ENCODE measurements at regions of chr5 and their contacts with region 1.

Region 1: DNA sequence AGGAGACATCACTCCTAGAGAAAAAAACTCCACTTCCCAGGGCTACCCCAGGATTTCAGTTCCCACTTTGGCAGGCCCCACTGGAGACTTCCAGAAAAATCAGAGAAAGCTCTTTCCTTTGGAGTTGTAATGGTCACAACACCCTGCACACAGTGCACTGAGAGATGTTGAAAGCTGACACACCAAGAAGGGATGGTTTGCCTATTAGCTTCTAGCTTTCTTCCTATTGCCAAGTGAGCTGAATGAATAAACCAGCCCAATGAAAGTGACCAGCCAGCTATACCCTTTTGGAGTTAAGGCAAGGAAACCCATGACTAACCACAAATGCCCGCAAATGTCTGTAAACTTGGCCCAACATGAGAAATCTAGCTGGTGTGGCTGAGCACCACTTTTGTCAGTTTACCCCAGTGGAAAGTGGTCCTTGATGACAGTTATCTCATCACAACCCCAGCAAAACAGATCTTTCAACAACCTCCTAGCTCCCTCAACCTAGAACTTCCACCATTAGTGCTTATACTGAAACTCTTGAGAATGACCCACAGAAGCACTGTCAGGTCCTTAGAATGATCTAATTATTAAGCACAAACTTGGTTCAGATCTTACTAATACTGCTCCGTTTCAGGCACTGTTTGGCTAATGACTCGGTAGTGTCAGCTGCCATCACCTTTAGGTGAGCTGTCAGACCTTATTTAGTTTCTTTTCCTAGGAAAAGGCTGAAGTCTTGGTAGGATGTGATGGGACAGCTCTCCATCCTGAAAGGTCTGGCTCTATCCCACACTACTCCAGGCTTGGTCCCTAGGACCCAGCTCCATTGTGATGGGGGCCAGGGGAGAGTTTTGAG is 11.2 kb downstream of the IRF1 start:
- DNase-seq: peak in 2 of 35 experiments; percentile 0 to 43
- ATAC-seq: no peak
- H3K4me3 ChIP-seq: no peak overlapping the region
- H3K4me3 Mint-ChIP-seq: peak overlapping the region in 1 of 3 donors; percentile 13
- H3K27ac ChIP-seq: peak overlapping the region; percentile 43
- H3K27ac Mint-ChIP-seq: peak overlapping the region; percentile 83 to 87
- H3K4me1 ChIP-seq: peaks cover 3 to 94% of the 10 kb centered on the region in 2 experiments
- H3K4me1 Mint-ChIP-seq: peaks cover 81 to 87% (median 83%) of the 10 kb centered on the region in 3 donors
- H3K27me3 ChIP-seq: no peaks in the 10 kb centered on the region
- H3K27me3 Mint-ChIP-seq: no peaks in the 10 kb centered on the region

Region 2: DNA sequence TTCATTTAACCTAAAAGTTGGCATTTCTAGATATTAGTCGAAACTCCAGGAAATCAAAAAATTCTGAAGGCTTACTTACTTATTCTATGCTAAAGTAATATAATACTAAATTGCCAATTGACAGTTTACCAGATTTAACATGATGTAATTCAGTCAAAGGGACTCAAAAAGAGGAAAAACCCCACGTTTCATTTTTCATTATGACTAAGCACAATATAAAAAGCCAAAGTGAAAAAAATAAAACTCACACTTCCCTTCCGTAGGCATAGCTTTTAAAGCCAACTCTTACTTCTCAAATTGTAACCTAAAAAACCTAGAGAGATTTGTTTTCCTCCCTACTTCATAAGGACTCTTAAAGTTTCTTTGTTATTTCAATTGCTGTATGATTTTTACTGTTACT is 990.9 kb before region 1 on chr5:
- CTCF ChIA-PET with region 1: no interaction called
- POLR2A ChIA-PET with region 1: no interaction called
- DNase-seq: no peak
- ATAC-seq: peak in 1 of 4 experiments; percentile 36
- H3K4me3 ChIP-seq: no peak overlapping the region
- H3K4me3 Mint-ChIP-seq: no peak overlapping the region
- H3K27ac ChIP-seq: no peak overlapping the region
- H3K27ac Mint-ChIP-seq: peak overlapping the region; percentile 81 to 87
- H3K4me1 ChIP-seq: no peaks in the 10 kb centered on the region
- H3K4me1 Mint-ChIP-seq: peaks cover 22 to 48% (median 45%) of the 10 kb centered on the region in 3 donors
- H3K27me3 ChIP-seq: no peaks in the 10 kb centered on the region
- H3K27me3 Mint-ChIP-seq: no peaks in the 10 kb centered on the region

Region 3: DNA sequence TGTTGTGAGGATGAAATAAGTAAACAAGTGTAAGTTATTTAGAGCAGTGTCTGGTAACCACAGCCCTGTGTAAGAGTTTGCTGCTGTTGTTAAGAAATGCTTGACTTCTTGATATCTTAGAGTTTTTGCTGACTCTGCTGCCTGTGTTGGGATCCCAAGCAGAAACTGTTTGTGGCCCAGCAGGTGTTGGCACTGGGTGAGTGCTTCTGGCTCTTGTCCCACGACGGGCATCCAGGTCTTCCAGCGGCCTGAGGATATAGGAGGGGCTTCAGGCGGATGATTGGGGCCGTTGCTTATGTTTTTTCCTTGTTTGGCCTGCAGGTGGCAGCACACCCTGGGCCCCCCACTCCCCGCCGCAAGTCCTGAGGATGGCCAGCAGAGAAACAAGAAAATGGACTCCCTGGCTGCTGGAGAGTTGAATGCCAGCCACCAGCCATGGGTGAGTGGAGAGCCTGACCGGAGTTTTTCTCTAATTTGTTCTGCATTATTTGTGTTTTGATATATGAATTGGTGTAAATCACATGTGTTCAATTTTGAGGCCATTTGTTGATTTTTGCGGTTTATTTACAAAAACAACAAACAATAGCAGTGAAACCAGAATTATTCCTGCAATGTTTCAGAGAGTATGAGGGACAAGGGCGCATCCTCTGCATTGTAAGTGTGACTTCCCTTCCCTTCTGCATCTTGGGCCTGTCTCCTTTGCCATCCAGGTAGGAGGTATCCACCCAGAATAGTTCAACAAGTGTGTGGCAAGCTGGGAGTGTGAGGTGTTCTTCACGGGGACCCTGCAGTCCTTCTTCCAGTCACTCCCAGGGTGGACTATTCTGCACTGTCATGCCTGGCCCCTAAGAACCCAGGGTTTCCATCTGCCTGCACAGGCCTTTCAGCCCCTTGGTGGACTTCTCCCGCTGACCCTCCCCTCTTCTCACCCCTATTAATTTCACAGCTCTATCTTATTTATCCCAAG is 59.5 kb before region 1 on chr5:
- CTCF ChIA-PET with region 1: interaction called in 1 of 2 experiments, 6 read pairs
- POLR2A ChIA-PET with region 1: interaction called, 15 to 16 read pairs
- DNase-seq: peak in 31 of 35 experiments; percentile 27 to 82 (median 48)
- ATAC-seq: peak; percentile 65 to 72 (median 67)
- H3K4me3 ChIP-seq: no peak overlapping the region
- H3K4me3 Mint-ChIP-seq: peak overlapping the region; percentile 71 to 75 (median 74)
- H3K27ac ChIP-seq: peak overlapping the region; percentile 94
- H3K27ac Mint-ChIP-seq: peak overlapping the region; percentile 98 to 100
- H3K4me1 ChIP-seq: peaks cover 36 to 80% of the 10 kb centered on the region in 2 experiments
- H3K4me1 Mint-ChIP-seq: peaks cover 97 to 98% (median 98%) of the 10 kb centered on the region in 3 donors
- H3K27me3 ChIP-seq: no peaks in the 10 kb centered on the region
- H3K27me3 Mint-ChIP-seq: no peaks in the 10 kb centered on the region

Measured in T-cell (primary cell).